ENCODE measurements at regions of chr6 and their contacts with region 1.

Region 1: GRCh38 chr6:151675746-151676416 is 131.6 kb upstream of the ESR1 start:
- DNase-seq: peak in 1 of 2 donors; percentile 79
- ATAC-seq: peak; percentile 61 to 71 (median 69)
- H3K4me3 ChIP-seq: no peak overlapping the region
- H3K4me3 Mint-ChIP-seq: no peak overlapping the region
- H3K27ac ChIP-seq: no peak overlapping the region
- H3K27ac Mint-ChIP-seq: no peak overlapping the region
- H3K4me1 ChIP-seq: no peaks in the 10 kb centered on the region
- H3K4me1 Mint-ChIP-seq: no peaks in the 10 kb centered on the region
- H3K27me3 ChIP-seq: no peaks in the 10 kb centered on the region
- H3K27me3 Mint-ChIP-seq: peaks cover 0 to 3% of the 10 kb centered on the region in 2 donors
- CTCF ChIP-seq: peak; percentile 60

Region 2: GRCh38 chr6:152124429-152125074 is 448.7 kb after region 1 on chr6:
- intact Hi-C with region 1: loop called (anchors 10 kb)
- DNase-seq: peak in 1 of 2 donors; percentile 55
- ATAC-seq: peak in 1 of 3 donors; percentile 51
- H3K4me3 ChIP-seq: no peak overlapping the region
- H3K4me3 Mint-ChIP-seq: no peak overlapping the region
- H3K27ac ChIP-seq: no peak overlapping the region
- H3K27ac Mint-ChIP-seq: peak overlapping the region; percentile 44 to 53
- H3K4me1 ChIP-seq: no peaks in the 10 kb centered on the region
- H3K4me1 Mint-ChIP-seq: peaks cover 3 to 4% of the 10 kb centered on the region in 2 donors
- H3K27me3 ChIP-seq: no peaks in the 10 kb centered on the region
- H3K27me3 Mint-ChIP-seq: no peaks in the 10 kb centered on the region
- CTCF ChIP-seq: peak; percentile 56

Region 3: GRCh38 chr6:152267967-152268845 is 592.3 kb after region 1 on chr6:
- intact Hi-C with region 1: loop called (anchors 10 kb)
- DNase-seq: peak in 1 of 2 donors; percentile 54
- ATAC-seq: no peak
- H3K4me3 ChIP-seq: no peak overlapping the region
- H3K4me3 Mint-ChIP-seq: no peak overlapping the region
- H3K27ac ChIP-seq: no peak overlapping the region
- H3K27ac Mint-ChIP-seq: peak overlapping the region in 1 of 2 donors; percentile 27
- H3K4me1 ChIP-seq: no peaks in the 10 kb centered on the region
- H3K4me1 Mint-ChIP-seq: peaks cover 6 to 13% of the 10 kb centered on the region in 2 donors
- H3K27me3 ChIP-seq: no peaks in the 10 kb centered on the region
- H3K27me3 Mint-ChIP-seq: no peaks in the 10 kb centered on the region
- CTCF ChIP-seq: peak; percentile 23